ENCODE measurements at regions of chr19 and their contacts with region 1.

Region 1: DNA sequence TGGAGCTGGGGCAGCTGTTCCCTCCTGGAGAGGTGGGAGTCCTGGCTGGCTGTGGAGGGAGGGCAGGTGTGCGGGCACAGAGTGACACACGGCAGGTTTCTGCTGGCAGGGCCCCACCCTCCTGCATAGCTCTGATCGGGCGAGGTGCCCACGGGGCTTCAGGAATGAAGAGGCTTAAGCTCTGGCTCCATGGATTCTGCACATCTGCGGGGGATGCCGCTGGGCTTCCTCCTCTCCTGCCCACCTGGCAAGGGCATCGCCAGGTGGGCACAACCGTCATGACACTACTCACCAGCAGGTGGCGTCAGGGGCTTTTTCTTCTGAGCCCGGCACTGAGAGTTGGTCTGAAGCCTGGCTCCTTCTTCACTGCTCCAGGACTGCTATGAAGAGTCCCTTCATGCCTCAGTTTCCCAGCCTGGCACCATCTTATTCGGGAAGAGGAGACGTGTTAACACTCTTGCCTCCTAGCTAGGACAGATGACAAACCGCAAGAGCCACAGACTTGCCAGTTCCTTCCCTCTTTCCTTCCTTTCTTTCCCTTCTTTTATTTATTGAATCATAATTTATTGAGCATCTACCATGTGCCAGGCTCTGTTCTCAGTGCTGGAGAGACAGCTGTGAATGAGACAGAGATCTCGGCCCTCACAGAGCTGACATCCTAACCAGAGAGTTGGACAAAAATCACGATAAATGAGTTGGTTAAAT is 15.2 kb upstream of the PAK4 start:
- DNase-seq: no peak
- H3K4me3 ChIP-seq: no peak overlapping the region
- CTCF ChIP-seq: peak; percentile 71

Region 2: DNA sequence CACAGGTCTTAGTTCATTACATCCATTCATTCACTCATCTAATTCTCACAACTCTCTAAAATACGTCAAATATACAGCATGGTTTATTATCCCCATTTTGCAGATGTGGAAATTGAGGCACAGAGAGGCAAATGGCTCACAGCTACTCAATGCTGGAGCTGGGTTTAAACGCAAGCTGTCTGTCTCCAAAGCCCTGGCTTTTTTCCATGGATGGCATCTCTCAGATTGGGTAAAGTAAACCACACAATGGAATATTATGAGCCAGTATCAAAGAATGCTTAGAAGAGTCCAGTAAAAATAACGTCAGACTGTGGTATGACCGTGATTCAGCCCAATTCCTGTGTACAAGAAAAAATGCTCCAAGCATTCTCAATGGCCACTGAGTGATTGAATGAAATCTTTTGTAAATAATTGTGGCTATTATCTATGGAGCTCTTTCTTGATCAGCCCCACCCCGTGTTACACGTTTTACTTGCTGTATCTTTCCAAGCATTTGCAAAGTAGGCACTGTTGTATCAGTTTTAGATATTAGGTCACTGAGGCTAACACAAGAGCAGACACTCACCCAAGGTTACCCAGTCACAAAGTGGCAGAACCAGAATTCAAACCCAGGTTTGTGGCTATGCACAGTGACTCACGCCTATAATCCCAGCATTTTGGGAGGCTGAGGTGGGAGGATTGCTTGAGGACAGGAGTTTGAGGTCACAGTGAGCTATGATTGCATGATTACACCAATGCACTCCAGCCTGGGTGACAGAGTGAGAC is 31.8 kb before region 1 on chr19:
- CTCF ChIA-PET with region 1: interaction called, 13 read pairs
- POLR2A ChIA-PET with region 1: no interaction called
- DNase-seq: peak; percentile 93
- H3K4me3 ChIP-seq: no peak overlapping the region
- CTCF ChIP-seq: no peak